SK-N-SH (cell line): ENCODE measurements at regions of chr22 and their contacts with region 1.

Region 1: DNA sequence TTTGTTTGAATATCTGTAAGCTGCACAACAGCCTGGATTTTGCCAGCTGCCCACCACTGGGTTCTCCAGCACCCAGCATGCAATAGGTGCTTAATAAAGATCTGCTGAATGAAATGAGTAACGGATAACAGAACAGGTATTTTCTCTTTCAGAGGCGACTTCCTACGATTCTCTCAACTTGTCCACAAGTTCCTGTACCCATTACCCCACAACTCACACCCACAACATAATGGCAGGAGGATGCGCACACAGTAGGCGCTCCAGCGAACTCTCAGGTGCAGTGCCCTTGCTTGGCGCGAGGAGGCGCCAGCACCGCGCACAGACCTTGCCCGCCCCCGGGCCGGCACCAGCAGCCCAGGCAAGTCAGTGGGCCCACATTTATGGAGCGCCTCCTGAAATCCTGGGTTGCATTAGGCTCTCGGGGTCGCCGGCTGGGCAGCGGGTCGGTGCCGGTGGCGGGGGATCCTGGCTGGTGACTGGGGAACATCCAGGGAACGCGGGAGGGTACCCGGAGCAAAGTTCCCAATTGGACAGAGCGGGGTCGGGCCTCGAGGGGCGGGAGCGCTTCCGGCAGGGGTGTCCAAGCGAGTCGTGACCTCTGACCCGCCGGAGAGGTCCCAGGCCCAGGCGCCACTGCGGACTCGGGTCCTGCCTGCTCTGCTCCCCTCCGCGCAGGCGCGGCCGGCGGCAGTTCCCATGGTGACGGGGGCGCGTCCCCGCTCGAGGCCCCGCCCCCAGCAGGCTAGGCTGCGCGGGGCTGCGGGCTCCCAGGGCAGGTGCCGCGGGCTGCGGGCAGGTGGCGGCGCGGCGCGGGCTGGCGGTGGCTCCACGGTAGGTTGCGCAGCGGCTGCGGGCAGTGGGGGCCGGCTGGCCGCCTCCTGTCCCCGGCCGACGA is at the start of gene KIAA1671:
- DNase-seq: peak; percentile 99
- H3K4me3 ChIP-seq: peak within 1 kb of the TSS; percentile 73 to 93
- H3K27ac ChIP-seq: peak within 1 kb of the TSS; percentile 82 to 87
- H3K4me1 ChIP-seq: peaks cover 14 to 15% of the 10 kb centered on the region in 2 experiments; a peak in 3 of 4 replicates
- H3K27me3 ChIP-seq: no peaks in the 10 kb centered on the region
- CTCF ChIP-seq: peak; percentile 97
- EP300 ChIP-seq: no peak
- RAD21 ChIP-seq: peak; percentile 91
- polyA plus RNA-seq, gene KIAA1671: 7.0 and 7.4 TPM in 2 replicates

Region 2: GRCh38 chr22:25067851-25068421 is 115.7 kb after region 1 on chr22:
- CTCF ChIA-PET with region 1: interaction called, 513 read pairs
- POLR2A ChIA-PET with region 1: no interaction called
- DNase-seq: peak; percentile 86
- H3K4me3 ChIP-seq: no peak overlapping the region
- H3K27ac ChIP-seq: peak overlapping the region in 1 of 2 experiments; percentile 86; a peak in 2 of 4 replicates
- H3K4me1 ChIP-seq: peaks cover 0 to 43% of the 10 kb centered on the region in 2 experiments; a peak in 1 of 4 replicates
- H3K27me3 ChIP-seq: no peaks in the 10 kb centered on the region
- CTCF ChIP-seq: no peak
- EP300 ChIP-seq: no peak
- RAD21 ChIP-seq: no peak